Uterus (tissue), 4 donors: ENCODE measurements at regions of chr7 and their contacts with region 1.

Region 1: GRCh38 chr7:26356929-26357798 is 65.5 kb downstream of the SNX10 start:
- DNase-seq: no peak
- H3K4me3 ChIP-seq: no peak overlapping the region
- H3K27ac ChIP-seq: no peak overlapping the region
- H3K4me1 ChIP-seq: no peaks in the 10 kb centered on the region
- H3K27me3 ChIP-seq: no peaks in the 10 kb centered on the region
- CTCF ChIP-seq: no peak
- POLR2A ChIP-seq: no peak

Region 2: DNA sequence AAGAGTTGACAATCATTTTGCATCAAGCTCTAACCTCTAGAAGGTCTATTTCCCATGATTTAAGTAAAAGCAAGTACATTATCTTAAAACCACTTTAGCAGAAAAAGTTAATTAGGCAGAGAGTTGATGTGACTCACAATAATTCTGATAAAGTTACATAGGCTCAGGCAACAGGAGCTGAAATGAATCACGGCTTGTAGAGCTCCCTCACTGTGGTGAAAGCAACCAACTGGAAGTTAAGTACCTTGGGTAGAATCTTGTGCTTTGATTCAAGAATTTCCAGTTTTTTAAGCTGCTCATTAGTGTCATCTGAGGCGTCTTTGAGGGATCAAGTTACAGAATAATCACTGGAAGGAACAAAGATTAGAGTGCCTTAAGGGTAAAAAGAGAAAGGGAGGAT is 274.1 kb before region 1 on chr7:
- intact Hi-C with region 1: loop called (anchors 10 kb)
- DNase-seq: no peak
- H3K4me3 ChIP-seq: no peak overlapping the region
- H3K27ac ChIP-seq: no peak overlapping the region
- H3K4me1 ChIP-seq: no peaks in the 10 kb centered on the region
- H3K27me3 ChIP-seq: peaks cover 0 to 9% of the 10 kb centered on the region in 2 donors
- CTCF ChIP-seq: no peak
- POLR2A ChIP-seq: no peak